GM12878 (cell line): ENCODE measurements at regions of chr4 and their contacts with region 1.

Region 1: DNA sequence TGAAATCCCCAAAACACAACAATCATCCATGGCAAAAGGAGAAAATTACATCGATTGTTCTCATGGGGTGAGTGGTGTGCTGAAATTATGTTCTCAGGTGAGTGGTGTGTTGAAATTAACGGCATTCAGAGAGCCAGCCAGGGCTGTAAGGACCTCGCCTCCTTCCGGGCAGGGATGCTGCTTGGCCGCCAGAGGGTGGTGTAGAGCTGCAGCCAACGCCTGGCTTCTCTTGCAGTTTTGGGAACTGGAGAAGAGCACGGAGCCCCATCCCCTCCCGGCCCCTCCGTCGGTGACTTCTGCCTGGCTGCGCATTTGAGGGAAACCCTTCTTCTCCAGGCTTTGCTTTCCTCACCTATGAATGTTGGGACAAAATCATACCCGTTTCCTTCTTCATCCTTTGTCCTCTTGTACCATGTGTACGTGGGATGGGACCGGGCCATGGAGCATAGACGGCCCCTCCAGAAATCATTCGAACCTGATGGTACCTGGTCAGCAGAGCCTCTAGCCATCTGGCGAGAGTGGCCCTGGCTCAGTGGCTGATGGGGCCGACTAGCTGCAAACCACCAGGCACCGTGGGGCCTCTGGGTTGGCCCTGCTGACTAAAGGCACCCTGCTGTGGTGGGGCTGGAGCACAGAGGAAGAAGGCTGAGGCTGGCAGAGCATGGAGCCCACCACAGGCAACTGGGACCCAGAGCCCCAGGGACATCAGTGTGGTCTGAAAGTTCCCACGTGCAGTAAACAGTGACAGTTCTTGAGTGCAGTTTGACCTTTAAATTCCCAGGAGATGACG is 28.4 kb downstream of the TRMT44 start:
- DNase-seq: peak; percentile 5
- ATAC-seq: peak; percentile 96
- H3K4me3 ChIP-seq: no peak overlapping the region
- H3K27ac ChIP-seq: no peak overlapping the region
- H3K4me1 ChIP-seq: no peaks in the 10 kb centered on the region
- H3K27me3 ChIP-seq: no peaks in the 10 kb centered on the region
- CTCF ChIP-seq: peak; percentile 90 to 98 (median 92)
- EP300 ChIP-seq: no peak
- POLR2A ChIP-seq: no peak
- RAD21 ChIP-seq: peak; percentile 82

Region 2: DNA sequence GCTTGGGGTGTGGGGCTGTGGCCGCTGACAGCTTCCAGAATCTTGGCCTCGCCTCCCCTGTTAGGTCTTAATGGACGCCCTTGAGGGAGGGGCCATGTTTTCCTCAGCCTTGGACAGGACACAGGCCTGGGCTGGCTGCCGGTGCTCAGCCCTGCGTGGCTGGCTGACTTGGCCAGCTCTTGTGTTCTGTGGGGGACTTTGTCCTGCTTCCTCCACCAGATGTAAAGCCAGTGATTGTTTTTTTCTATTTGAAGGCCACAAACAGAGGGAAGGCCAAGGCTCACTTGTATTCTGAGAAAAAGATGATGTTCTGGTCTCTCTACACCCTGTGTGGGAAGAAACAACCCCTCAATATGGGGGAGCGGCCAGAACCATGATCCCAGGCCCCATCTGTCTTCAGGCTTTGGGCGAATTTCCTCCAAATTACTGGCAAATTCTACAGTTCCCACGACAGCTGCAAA is 128.1 kb before region 1 on chr4:
- CTCF ChIA-PET with region 1: no interaction called
- POLR2A ChIA-PET with region 1: no interaction called
- RAD21 ChIA-PET with region 1: no interaction called
- SMC1A ChIA-PET with region 1: no interaction called
- in situ Hi-C with region 1: no loop called
- intact Hi-C with region 1: no loop called
- DNase-seq: no peak
- ATAC-seq: no peak
- H3K4me3 ChIP-seq: no peak overlapping the region
- H3K27ac ChIP-seq: no peak overlapping the region
- H3K4me1 ChIP-seq: no peaks in the 10 kb centered on the region
- H3K27me3 ChIP-seq: no peaks in the 10 kb centered on the region
- CTCF ChIP-seq: no peak
- EP300 ChIP-seq: no peak
- POLR2A ChIP-seq: no peak
- RAD21 ChIP-seq: no peak

Region 3: GRCh38 chr4:8547108-8547970 is 78.4 kb after region 1 on chr4:
- CTCF ChIA-PET with region 1: interaction called, 3 read pairs
- POLR2A ChIA-PET with region 1: no interaction called
- RAD21 ChIA-PET with region 1: no interaction called
- SMC1A ChIA-PET with region 1: no interaction called
- in situ Hi-C with region 1: no loop called
- intact Hi-C with region 1: loop called (anchors 1 kb)
- DNase-seq: no peak
- ATAC-seq: peak; percentile 57
- H3K4me3 ChIP-seq: no peak overlapping the region
- H3K27ac ChIP-seq: no peak overlapping the region
- H3K4me1 ChIP-seq: no peaks in the 10 kb centered on the region
- H3K27me3 ChIP-seq: no peaks in the 10 kb centered on the region; a peak in 1 of 4 replicates
- CTCF ChIP-seq: peak; percentile 26 to 40 (median 31); a peak in 4 of 6 replicates
- EP300 ChIP-seq: no peak
- POLR2A ChIP-seq: no peak
- RAD21 ChIP-seq: peak; percentile 55

Region 4: GRCh38 chr4:8586671-8587455 is 117.9 kb after region 1 on chr4:
- CTCF ChIA-PET with region 1: interaction called, 15 read pairs
- POLR2A ChIA-PET with region 1: no interaction called
- RAD21 ChIA-PET with region 1: interaction called, 3 read pairs
- SMC1A ChIA-PET with region 1: interaction called, 3 read pairs
- in situ Hi-C with region 1: no loop called
- intact Hi-C with region 1: no loop called
- DNase-seq: no peak
- ATAC-seq: peak; percentile 79
- H3K4me3 ChIP-seq: no peak overlapping the region
- H3K27ac ChIP-seq: no peak overlapping the region
- H3K4me1 ChIP-seq: no peaks in the 10 kb centered on the region
- H3K27me3 ChIP-seq: peaks cover 0 to 3% of the 10 kb centered on the region in 2 experiments; a peak in 1 of 4 replicates
- CTCF ChIP-seq: peak in 2 of 3 experiments; percentile 27 to 31; a peak in 2 of 6 replicates
- EP300 ChIP-seq: no peak
- POLR2A ChIP-seq: no peak
- RAD21 ChIP-seq: 0 out of 2 replicates have a peak, but pooled peaks have one; percentile 7

Region 5: DNA sequence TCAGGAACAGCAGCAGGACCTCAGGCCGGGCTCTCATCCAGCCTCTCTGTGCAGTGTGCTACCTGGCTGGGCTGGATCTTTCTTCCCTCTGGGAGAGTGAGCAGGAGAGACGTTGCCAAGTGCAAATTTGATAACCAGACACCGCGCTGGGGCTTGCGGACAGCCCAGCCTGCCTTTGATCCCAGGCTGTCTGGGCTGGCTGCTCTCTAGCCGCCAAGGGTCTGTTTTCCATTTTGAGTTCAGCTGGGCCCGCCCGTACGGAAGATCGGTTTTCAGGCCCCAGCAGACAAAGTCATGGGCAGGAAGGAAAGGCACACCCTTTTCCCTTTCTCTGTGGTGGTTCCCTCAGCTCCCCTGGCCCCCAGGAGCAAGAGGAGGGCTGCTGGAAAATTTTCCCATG is 213.8 kb after region 1 on chr4:
- CTCF ChIA-PET with region 1: no interaction called
- POLR2A ChIA-PET with region 1: no interaction called
- RAD21 ChIA-PET with region 1: no interaction called
- SMC1A ChIA-PET with region 1: no interaction called
- in situ Hi-C with region 1: no loop called
- intact Hi-C with region 1: no loop called
- DNase-seq: no peak
- ATAC-seq: no peak
- H3K4me3 ChIP-seq: no peak overlapping the region
- H3K27ac ChIP-seq: no peak overlapping the region
- H3K4me1 ChIP-seq: no peaks in the 10 kb centered on the region
- H3K27me3 ChIP-seq: no peaks in the 10 kb centered on the region
- CTCF ChIP-seq: no peak
- EP300 ChIP-seq: no peak
- POLR2A ChIP-seq: no peak
- RAD21 ChIP-seq: no peak